Head of caudate nucleus (tissue), 42 donors: ENCODE measurements at regions of chr3 and their contacts with region 1.

Region 1: GRCh38 chr3:187679638-187680396 is 9.6 kb upstream of the SST start:
- DNase-seq: peak; percentile 43 to 92 (median 82)

Region 2: DNA sequence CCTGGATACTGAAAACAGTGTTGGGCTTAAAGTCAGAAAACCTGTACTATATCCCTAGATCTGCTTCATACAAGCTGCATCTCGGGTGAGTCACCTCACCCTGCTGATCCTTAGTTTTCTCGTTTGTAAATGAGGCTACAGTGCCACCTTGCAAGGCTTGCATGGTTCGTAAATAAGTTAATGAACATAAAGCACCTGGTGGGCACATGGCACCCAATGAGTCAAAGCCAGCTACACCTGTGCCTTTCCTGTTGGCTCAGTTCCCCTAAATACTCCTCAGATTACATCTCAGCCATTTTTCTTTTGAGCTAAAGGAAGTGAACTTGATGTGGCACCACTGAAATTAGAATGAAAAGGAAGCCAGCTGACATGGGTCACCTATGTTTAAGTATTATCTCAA is 456.0 kb before region 1 on chr3:
- intact Hi-C with region 1: loop called (anchors 5 kb)
- DNase-seq: no peak

Region 3: GRCh38 chr3:187319699-187320302 is 360.0 kb before region 1 on chr3:
- intact Hi-C with region 1: loop called (anchors 2 kb)
- DNase-seq: peak; percentile 34 to 91 (median 78)

Region 4: GRCh38 chr3:187490366-187490765 is 189.5 kb before region 1 on chr3:
- intact Hi-C with region 1: no loop called
- DNase-seq: no peak

Region 5: DNA sequence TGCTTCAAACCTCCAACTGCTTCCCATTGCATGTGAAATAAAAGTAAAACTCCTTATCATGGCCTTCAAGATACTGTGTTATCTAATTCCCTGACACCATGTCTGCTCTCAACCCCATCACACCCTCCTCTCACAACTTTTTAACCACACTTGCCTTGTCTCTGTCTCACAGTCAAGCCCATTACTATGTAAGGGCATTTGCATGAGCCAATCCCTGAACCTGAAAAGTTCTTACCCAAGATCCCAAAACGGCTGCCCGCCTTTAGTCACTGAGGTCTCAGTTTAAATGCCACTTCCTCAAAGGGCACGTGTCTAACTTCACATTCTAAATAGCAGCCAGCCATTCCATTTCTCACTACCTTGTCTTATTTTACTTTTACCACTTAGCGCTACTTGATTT is 92.7 kb before region 1 on chr3:
- intact Hi-C with region 1: no loop called
- DNase-seq: no peak

Region 6: GRCh38 chr3:187714404-187714979 is 34.7 kb after region 1 on chr3:
- intact Hi-C with region 1: no loop called
- DNase-seq: peak; percentile 28 to 92 (median 78)

Region 7: GRCh38 chr3:187946163-187946691 is 266.4 kb after region 1 on chr3:
- intact Hi-C with region 1: no loop called
- DNase-seq: no peak